Mammary epithelial cell (primary cell): ENCODE measurements at regions of chr4 and their contacts with region 1.

Region 1: GRCh38 chr4:150867148-150867547 is 147.9 kb downstream of the LRBA start:
- DNase-seq: peak; percentile 72
- H3K4me3 ChIP-seq: no peak overlapping the region
- H3K27ac ChIP-seq: no peak overlapping the region
- H3K4me1 ChIP-seq: no peaks in the 10 kb centered on the region
- H3K27me3 ChIP-seq: no peaks in the 10 kb centered on the region
- CTCF ChIP-seq: peak; percentile 28 to 52

Region 2: DNA sequence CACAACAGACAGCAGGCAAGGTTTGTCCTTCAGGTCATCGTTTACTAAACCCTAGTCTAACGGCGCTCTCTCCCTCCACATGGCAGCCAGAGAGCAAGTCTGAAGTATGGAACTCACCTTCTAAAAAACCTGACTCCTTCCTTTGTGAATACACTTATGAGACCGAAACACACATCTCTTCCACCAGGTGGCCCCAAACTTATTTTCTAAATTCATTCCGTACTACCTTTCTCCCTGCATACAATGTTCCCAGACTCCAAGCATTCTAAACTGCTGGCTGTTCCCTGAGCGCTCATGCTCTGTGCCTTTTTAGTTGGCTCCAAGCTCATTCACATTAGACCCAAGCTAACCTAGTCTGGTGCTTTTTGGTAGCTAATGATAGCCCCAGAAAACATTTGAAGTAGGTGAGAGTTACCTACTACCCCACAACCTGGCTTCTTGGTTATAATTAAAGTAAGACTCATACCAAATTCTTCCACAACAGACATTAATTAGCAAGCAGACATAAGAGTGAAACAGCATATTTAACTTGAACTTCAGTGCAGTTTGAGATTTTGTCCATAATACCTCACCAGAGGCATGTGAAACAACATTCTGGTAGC is 856.5 kb before region 1 on chr4:
- CTCF ChIA-PET with region 1: no interaction called
- dilution Hi-C with region 1: no loop called
- in situ Hi-C with region 1: loop called in 1 of 2 experiments (anchors 25 kb)
- intact Hi-C with region 1: loop called (anchors 2 kb)
- DNase-seq: peak; percentile 52
- H3K4me3 ChIP-seq: no peak overlapping the region
- H3K27ac ChIP-seq: no peak overlapping the region
- H3K4me1 ChIP-seq: no peaks in the 10 kb centered on the region
- H3K27me3 ChIP-seq: no peaks in the 10 kb centered on the region
- CTCF ChIP-seq: peak; percentile 44 to 61

Region 3: DNA sequence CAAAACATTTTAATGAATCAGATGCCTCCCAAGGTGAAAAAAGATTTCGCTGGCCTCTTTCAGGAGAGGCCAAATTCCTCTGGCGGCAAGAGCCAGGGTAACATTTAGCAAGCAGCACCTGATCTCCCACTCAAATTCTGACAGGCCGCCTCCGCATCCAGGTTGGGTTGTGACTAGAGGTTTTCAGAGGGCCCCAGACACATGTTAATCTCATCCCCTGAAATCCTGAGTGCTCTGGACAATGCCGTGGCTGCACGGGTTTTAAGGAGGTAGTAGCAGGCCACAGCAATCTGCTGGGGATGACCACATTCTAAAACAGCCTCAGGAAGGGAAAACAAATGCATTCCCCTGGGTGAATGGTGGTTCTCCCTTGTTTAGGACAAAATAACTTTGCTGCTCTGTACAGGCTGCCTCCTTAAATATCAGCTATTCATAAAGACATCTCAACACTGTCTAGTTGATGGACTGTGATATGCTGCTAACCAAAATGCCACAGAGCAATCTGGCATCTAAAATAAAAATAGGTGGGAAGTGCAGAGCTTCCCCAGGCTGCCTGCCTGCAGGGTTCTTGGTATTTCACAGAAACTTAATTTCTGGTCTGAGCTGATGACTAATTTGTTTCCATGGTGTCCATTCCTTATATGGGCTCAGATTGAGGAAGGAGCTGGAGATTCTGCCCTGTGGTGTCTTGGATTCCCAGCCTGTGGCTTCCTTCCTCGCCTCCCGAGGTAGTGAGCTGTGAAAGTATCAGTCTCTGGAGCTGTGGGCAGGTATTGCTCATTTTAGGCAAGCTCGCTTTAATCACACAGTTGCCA is 586.9 kb before region 1 on chr4:
- CTCF ChIA-PET with region 1: no interaction called
- dilution Hi-C with region 1: no loop called
- in situ Hi-C with region 1: loop called (anchors 10 kb)
- intact Hi-C with region 1: no loop called
- DNase-seq: peak; percentile 96
- H3K4me3 ChIP-seq: peak overlapping the region in 1 of 3 experiments; percentile 3
- H3K27ac ChIP-seq: peak overlapping the region; percentile 39
- H3K4me1 ChIP-seq: peaks cover 25% of the 10 kb centered on the region
- H3K27me3 ChIP-seq: no peaks in the 10 kb centered on the region
- CTCF ChIP-seq: no peak

Region 4: GRCh38 chr4:150593996-150594395 is 273.2 kb before region 1 on chr4:
- CTCF ChIA-PET with region 1: interaction called, 11 read pairs
- dilution Hi-C with region 1: no loop called
- in situ Hi-C with region 1: no loop called
- intact Hi-C with region 1: no loop called
- DNase-seq: no peak
- H3K4me3 ChIP-seq: no peak overlapping the region
- H3K27ac ChIP-seq: no peak overlapping the region
- H3K4me1 ChIP-seq: no peaks in the 10 kb centered on the region
- H3K27me3 ChIP-seq: no peaks in the 10 kb centered on the region
- CTCF ChIP-seq: no peak